ENCODE measurements at regions of chr17 and their contacts with region 1.

Region 1: DNA sequence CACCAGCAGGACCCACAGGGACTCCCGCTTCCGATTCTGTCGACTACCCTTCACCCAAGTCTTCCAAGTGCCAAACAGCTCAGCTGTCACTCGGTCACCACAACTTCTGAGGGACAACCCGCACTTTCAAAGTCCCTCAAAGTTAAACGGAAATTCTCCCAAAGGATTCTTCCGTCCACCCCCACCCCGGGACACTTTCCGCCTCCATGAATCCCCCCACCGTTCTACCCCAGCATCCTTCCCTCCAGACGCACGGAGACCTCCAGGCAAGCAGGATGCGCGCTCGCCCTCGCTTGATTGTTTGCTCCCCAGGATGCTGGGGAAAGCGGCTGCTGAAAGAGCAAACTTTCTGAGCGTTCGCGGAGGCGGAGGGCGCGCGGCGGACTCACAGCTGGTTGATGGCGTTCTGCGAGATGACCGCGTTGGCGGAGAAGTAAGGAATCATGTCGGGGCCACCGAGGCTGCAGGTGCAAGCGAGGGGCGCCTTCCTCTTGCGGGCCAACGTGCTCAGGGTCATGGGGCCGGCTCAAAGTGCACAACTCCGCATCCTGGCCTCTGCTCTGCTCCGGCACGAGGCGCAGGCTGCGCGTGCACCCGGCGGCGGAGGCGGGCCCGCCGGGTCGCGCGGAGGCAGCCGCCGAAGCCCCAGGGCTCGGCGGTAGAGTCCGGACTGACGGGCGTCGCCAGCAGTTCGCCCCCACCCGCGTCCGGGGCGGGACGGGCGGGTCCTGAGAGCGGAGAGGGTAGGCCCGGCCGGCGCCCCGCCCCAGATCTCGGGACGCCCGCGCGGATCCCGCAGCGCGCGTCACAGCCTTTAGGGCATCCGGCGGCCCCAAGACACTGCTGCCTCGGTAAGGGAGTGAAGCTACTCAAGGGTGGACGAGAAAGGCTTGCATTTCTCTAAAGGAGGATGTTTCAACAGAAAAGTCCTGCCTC is 138.3 kb upstream of the CORO6 start:
- DNase-seq: peak; percentile 85 to 91 (median 87)
- H3K4me3 ChIP-seq: peak overlapping the region; percentile 78 to 100 (median 98)
- H3K4me3 Mint-ChIP-seq: peak overlapping the region; percentile 99
- H3K27ac ChIP-seq: peak overlapping the region; percentile 84 to 90
- H3K27ac Mint-ChIP-seq: peak overlapping the region; percentile 93 to 97 (median 95)
- H3K4me1 ChIP-seq: peaks cover 27 to 40% of the 10 kb centered on the region in 2 donors
- H3K4me1 Mint-ChIP-seq: peaks cover 28% of the 10 kb centered on the region
- H3K27me3 ChIP-seq: no peaks in the 10 kb centered on the region
- H3K27me3 Mint-ChIP-seq: peaks cover 0 to 1% (median 0%) of the 10 kb centered on the region in 3 donors
- CTCF ChIP-seq: no peak

Region 2: GRCh38 chr17:29291163-29291752 is 469.8 kb before region 1 on chr17:
- intact Hi-C with region 1: no loop called
- DNase-seq: peak; percentile 57 to 74 (median 68)
- H3K4me3 ChIP-seq: peak overlapping the region; percentile 92 to 99 (median 93)
- H3K4me3 Mint-ChIP-seq: peak overlapping the region; percentile 87 to 91
- H3K27ac ChIP-seq: peak overlapping the region in 1 of 2 donors; percentile 85
- H3K27ac Mint-ChIP-seq: peak overlapping the region in 6 of 7 donors; percentile 12 to 92 (median 82)
- H3K4me1 ChIP-seq: peaks cover 32 to 43% of the 10 kb centered on the region in 2 donors
- H3K4me1 Mint-ChIP-seq: peaks cover 42% of the 10 kb centered on the region
- H3K27me3 ChIP-seq: no peaks in the 10 kb centered on the region
- H3K27me3 Mint-ChIP-seq: peaks cover 0 to 3% (median 0%) of the 10 kb centered on the region in 3 donors
- CTCF ChIP-seq: peak; percentile 82

Region 3: DNA sequence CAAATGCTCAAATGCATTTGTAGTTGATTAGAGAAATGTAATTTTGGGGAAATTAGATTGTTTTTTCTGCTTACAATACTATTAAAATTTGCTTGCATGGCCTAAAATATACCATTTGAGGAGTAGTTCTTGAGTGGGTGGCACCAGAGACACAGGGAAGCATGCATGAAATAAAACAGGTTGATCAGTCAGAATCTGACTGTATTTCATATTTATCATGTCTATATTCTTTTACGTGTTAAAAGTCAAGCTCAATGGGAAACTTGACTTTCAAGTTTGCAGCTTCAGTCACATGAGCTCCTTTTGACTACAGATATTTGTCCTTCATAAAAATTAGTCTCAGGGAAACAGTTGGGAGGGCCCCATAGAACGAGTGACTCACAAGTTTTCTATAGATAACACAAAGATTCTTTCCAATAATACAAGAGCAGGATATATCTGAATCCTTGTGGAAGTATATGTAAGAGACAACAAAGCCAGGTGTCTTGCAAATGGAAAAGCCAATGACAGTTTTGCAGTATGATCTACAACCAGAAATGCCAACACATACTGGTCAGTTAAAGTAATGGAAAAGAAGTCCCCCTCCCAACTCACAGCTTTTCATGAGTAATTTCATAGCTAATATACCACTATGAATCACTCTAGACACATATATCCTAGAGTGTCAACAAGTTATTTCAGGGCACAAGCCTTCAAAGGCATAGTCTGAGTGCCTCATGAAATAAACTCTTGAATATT is 96.1 kb before region 1 on chr17:
- intact Hi-C with region 1: no loop called
- DNase-seq: peak in 1 of 3 donors; percentile 59
- H3K4me3 ChIP-seq: no peak overlapping the region
- H3K4me3 Mint-ChIP-seq: no peak overlapping the region
- H3K27ac ChIP-seq: peak overlapping the region in 1 of 2 donors; percentile 84
- H3K27ac Mint-ChIP-seq: peak overlapping the region; percentile 78 to 94 (median 82)
- H3K4me1 ChIP-seq: peaks cover 28 to 31% of the 10 kb centered on the region in 2 donors
- H3K4me1 Mint-ChIP-seq: peaks cover 23% of the 10 kb centered on the region
- H3K27me3 ChIP-seq: no peaks in the 10 kb centered on the region
- H3K27me3 Mint-ChIP-seq: no peaks in the 10 kb centered on the region
- CTCF ChIP-seq: no peak

Region 4: DNA sequence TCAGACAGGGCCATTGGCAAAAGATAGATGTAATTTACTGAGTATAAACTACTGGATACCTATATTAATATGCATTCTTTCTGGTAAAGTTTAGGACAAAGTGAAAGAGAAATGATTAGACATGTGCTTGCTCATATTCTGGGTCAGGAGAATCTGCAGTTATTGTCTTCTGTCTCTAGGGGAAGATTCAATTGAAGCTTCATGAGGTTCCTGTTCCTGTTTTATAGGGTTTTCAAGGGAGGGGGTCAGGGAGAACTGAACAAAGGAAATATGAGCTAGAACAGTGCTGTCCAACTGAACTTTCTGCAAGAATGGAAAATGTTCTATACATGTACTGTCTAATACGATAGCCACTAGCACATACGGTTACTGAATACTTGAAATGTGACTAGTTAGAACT is 79.0 kb before region 1 on chr17:
- intact Hi-C with region 1: loop called (anchors 5 kb)
- DNase-seq: peak; percentile 65 to 77 (median 75)
- H3K4me3 ChIP-seq: peak overlapping the region in 2 of 3 experiments; percentile 16 to 67
- H3K4me3 Mint-ChIP-seq: peak overlapping the region; percentile 10 to 77
- H3K27ac ChIP-seq: peak overlapping the region; percentile 39 to 86
- H3K27ac Mint-ChIP-seq: peak overlapping the region; percentile 85 to 96 (median 91)
- H3K4me1 ChIP-seq: peaks cover 47 to 48% of the 10 kb centered on the region in 2 donors
- H3K4me1 Mint-ChIP-seq: peaks cover 46% of the 10 kb centered on the region
- H3K27me3 ChIP-seq: no peaks in the 10 kb centered on the region
- H3K27me3 Mint-ChIP-seq: no peaks in the 10 kb centered on the region
- CTCF ChIP-seq: peak; percentile 56

Region 5: GRCh38 chr17:29857823-29858222 is 96.8 kb after region 1 on chr17:
- intact Hi-C with region 1: no loop called
- DNase-seq: no peak
- H3K4me3 ChIP-seq: no peak overlapping the region
- H3K4me3 Mint-ChIP-seq: no peak overlapping the region
- H3K27ac ChIP-seq: no peak overlapping the region
- H3K27ac Mint-ChIP-seq: peak overlapping the region in 1 of 7 donors; percentile 63
- H3K4me1 ChIP-seq: peaks cover 42 to 43% of the 10 kb centered on the region in 2 donors
- H3K4me1 Mint-ChIP-seq: peaks cover 52% of the 10 kb centered on the region
- H3K27me3 ChIP-seq: no peaks in the 10 kb centered on the region
- H3K27me3 Mint-ChIP-seq: peaks cover 0 to 4% (median 0%) of the 10 kb centered on the region in 3 donors
- CTCF ChIP-seq: no peak